Activated CD8-positive, alpha-beta T cell treated with anti-CD3 and anti-CD28 coated beads, Interleukin-2, amount 10 ng/mL, durations not matched to agents 7 days and 5 days (primary cell): ENCODE measurements at regions of chr16 and their contacts with region 1.

Region 1: GRCh38 chr16:14285513-14286385 is 214.6 kb downstream of the MRTFB start:
- DNase-seq: peak; percentile 93
- ATAC-seq: peak; percentile 83
- H3K4me3 Mint-ChIP-seq: peak overlapping the region; percentile 92
- H3K27ac Mint-ChIP-seq: peak overlapping the region; percentile 84
- H3K4me1 Mint-ChIP-seq: peaks cover 16% of the 10 kb centered on the region
- H3K27me3 Mint-ChIP-seq: no peaks in the 10 kb centered on the region

Region 2: GRCh38 chr16:14097182-14097959 is 188.4 kb before region 1 on chr16:
- CTCF ChIA-PET with region 1: no interaction called
- POLR2A ChIA-PET with region 1: no interaction called
- DNase-seq: no peak
- ATAC-seq: no peak
- H3K4me3 Mint-ChIP-seq: no peak overlapping the region
- H3K27ac Mint-ChIP-seq: no peak overlapping the region
- H3K4me1 Mint-ChIP-seq: peaks cover 9% of the 10 kb centered on the region
- H3K27me3 Mint-ChIP-seq: no peaks in the 10 kb centered on the region

Region 3: DNA sequence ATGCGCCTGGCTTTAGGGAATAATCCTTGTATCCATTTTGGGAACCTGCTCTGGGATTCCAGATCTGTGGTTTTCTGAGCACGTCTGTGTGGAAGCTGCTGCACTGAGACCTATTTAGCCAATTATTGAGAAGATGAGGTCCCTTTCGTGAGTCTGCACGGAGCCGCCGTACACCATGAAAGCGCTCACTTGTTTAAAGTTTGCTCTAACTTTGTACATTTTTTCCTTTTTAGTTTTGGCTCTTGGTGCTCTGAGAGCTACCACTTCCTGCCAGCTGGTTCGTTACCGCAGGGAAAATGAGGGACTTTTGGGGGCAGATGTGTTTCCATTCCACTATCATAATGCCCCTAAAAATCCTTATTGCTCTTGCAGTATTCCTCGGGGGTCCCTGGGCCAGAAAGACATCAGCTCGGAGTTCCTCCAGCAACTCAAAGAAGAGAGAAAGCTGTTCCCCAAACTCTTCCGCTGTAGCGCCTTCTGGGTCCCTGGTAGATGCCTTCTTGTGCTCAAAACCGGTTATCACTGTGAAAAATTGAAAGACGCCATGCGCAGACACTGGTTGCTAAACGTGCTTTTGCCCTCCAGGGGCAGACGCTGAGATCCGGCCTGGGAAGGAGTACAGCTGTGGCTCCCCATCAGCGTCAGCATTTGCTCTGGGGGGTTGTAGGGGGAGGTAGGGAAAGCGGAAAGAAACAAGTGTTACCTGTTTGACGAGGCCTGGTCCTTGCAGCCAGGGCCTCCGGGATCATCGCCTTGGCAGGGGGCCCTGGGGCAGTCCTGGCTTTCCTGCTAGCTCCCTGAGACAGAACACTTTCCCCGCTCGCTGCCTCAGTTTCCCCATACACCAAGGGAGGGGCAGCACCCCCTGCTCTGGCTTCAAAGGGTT is 23.5 kb after region 1 on chr16:
- CTCF ChIA-PET with region 1: interaction called, 7 read pairs
- POLR2A ChIA-PET with region 1: interaction called, 15 read pairs
- DNase-seq: peak; percentile 59
- ATAC-seq: peak; percentile 76
- H3K4me3 Mint-ChIP-seq: peak overlapping the region; percentile 63
- H3K27ac Mint-ChIP-seq: peak overlapping the region; percentile 63
- H3K4me1 Mint-ChIP-seq: peaks cover 22% of the 10 kb centered on the region
- H3K27me3 Mint-ChIP-seq: peaks cover 9% of the 10 kb centered on the region